K562 (cell line): ENCODE measurements at regions of chr11 and their contacts with region 1.

Region 1: DNA sequence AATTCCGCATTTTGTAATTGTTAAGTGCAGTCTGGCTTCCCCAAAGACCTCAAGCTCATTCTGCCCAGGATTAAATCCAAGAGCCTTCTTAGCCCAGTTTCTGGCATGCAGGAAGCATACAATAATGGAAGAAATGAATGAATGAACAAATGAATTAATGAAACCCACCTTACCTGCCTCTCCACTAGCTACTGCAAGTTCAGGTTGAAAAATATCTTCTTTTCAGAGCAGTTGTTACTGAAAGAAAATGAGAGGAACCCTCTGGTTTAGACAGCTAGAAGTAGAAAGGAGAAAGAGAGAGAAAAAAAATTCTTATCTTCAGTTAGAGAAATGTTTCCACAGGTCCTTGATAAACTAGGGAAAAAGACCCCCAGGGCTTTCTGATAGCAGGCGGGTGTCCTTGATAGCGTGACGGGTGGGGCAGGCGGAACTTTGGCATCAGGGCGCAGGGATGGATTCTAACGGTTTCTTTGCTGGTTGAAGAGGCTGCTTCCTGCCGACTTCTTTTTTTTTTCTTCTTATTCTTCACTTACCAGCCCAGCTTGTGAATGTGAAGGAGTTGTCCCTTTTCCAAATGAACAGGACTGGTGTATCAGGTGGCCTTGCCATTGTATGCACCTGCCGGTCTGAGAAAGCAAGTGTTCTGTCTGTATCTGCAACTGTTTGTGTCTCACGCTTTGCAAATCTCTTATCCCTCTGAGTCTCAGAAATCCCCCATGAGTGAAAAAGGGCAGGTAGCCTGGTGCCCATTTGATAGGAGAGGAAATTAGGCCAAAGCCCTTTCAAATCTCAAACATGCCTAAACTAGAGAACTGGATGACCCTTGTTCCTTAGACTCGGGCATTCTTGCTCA is 10.0 kb downstream of the LMO2 start:
- DNase-seq: peak; percentile 51 to 71 (median 64)
- ATAC-seq: peak; percentile 3; the same call in 1 of the 3 replicates
- H3K4me3 ChIP-seq: peak overlapping the region; percentile 16
- H3K27ac ChIP-seq: peak overlapping the region; percentile 58
- H3K4me1 ChIP-seq: peaks cover 19 to 52% of the 10 kb centered on the region in 2 experiments; a peak in 3 of 5 replicates
- H3K27me3 ChIP-seq: no peaks in the 10 kb centered on the region; a peak in 1 of 5 replicates
- CTCF ChIP-seq: no peak
- EP300 ChIP-seq: peak; percentile 51; the same call in 1 of the 2 replicates
- POLR2A ChIP-seq: no peak
- RAD21 ChIP-seq: no peak

Region 2: GRCh38 chr11:33015621-33016551 is 866.0 kb before region 1 on chr11 and contains the start of gene DEPDC7:
- CTCF ChIA-PET with region 1: no interaction called
- POLR2A ChIA-PET with region 1: no interaction called
- in situ Hi-C with region 1: no loop called
- intact Hi-C with region 1: no loop called
- DNase-seq: peak; percentile 92 to 97 (median 92)
- ATAC-seq: peak; percentile 98
- H3K4me3 ChIP-seq: peak within 1 kb of the TSS; percentile 78
- H3K27ac ChIP-seq: peak within 1 kb of the TSS; percentile 58
- H3K4me1 ChIP-seq: peaks cover 16% of the 10 kb centered on the region in 2 experiments; a peak in 4 of 5 replicates
- H3K27me3 ChIP-seq: no peaks in the 10 kb centered on the region
- CTCF ChIP-seq: no peak
- EP300 ChIP-seq: no peak
- POLR2A ChIP-seq: peak; percentile 87
- RAD21 ChIP-seq: no peak
- polyA plus RNA-seq, gene DEPDC7: 5.4 to 8.1 TPM

Region 3: GRCh38 chr11:33863418-33864172 is 18.3 kb before region 1 on chr11:
- CTCF ChIA-PET with region 1: no interaction called
- POLR2A ChIA-PET with region 1: interaction called, 26 read pairs
- in situ Hi-C with region 1: no loop called
- intact Hi-C with region 1: no loop called
- DNase-seq: no peak
- ATAC-seq: no peak
- H3K4me3 ChIP-seq: no peak overlapping the region
- H3K27ac ChIP-seq: no peak overlapping the region; the same call in 2 of the 3 replicates
- H3K4me1 ChIP-seq: peaks cover 10 to 20% of the 10 kb centered on the region in 2 experiments; a peak in 4 of 5 replicates
- H3K27me3 ChIP-seq: no peaks in the 10 kb centered on the region
- CTCF ChIP-seq: no peak
- EP300 ChIP-seq: no peak
- POLR2A ChIP-seq: no peak
- RAD21 ChIP-seq: peak in 1 of 2 experiments; percentile 22; a peak in 1 of 4 replicates

Region 4: GRCh38 chr11:33869481-33870422 is 12.1 kb before region 1 on chr11:
- CTCF ChIA-PET with region 1: no interaction called
- POLR2A ChIA-PET with region 1: interaction called, 26 read pairs
- in situ Hi-C with region 1: no loop called
- intact Hi-C with region 1: no loop called
- DNase-seq: peak; percentile 61 to 75 (median 70)
- ATAC-seq: peak; percentile 57
- H3K4me3 ChIP-seq: peak overlapping the region; percentile 75
- H3K27ac ChIP-seq: peak overlapping the region; percentile 75
- H3K4me1 ChIP-seq: peaks cover 32 to 43% of the 10 kb centered on the region in 2 experiments
- H3K27me3 ChIP-seq: no peaks in the 10 kb centered on the region
- CTCF ChIP-seq: no peak
- EP300 ChIP-seq: no peak
- POLR2A ChIP-seq: no peak
- RAD21 ChIP-seq: no peak

Region 5: DNA sequence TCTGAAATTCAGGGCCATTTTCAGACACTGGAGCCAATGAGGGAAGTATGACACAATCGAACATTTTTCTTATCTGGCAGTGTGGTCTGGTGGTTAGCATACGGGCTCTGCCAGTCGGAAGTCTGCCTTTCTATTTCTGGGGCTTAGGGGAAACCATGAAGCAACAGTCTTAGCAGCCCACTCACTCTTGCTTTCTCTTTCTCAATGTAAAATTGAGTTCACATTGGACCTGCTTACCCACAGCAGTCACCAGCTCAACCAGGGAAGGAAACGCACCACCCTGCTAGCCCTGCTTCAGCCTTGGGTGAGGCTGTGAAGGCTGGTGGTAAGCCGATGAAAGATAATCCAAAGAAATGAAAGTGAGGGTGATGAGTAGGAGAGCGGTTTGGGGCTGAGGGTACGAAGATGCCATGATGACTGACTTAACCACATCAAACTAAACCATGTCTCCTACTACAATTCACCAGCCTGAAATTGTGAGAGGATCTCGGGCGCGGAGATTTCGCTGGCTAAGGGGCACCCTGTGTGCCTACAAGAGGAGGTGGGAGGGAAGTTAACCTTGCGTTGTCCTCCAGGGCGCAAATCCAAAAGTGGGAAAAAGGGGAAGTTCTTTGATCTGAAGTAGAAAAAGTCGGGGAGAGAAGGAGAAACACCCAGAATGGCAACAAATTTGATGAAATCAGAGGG is 12.0 kb after region 1 on chr11:
- CTCF ChIA-PET with region 1: no interaction called
- POLR2A ChIA-PET with region 1: interaction called, 38 read pairs
- in situ Hi-C with region 1: no loop called
- intact Hi-C with region 1: no loop called
- DNase-seq: peak in 1 of 4 experiments; percentile 60
- ATAC-seq: peak; percentile 3; the same call in 1 of the 3 replicates
- H3K4me3 ChIP-seq: no peak overlapping the region
- H3K27ac ChIP-seq: peak overlapping the region; percentile 76
- H3K4me1 ChIP-seq: peaks cover 39 to 58% of the 10 kb centered on the region in 2 experiments
- H3K27me3 ChIP-seq: no peaks in the 10 kb centered on the region
- CTCF ChIP-seq: no peak
- EP300 ChIP-seq: no peak
- POLR2A ChIP-seq: no peak
- RAD21 ChIP-seq: no peak